PC-9 (cell line): ENCODE measurements at regions of chr6 and their contacts with region 1.

Region 1: DNA sequence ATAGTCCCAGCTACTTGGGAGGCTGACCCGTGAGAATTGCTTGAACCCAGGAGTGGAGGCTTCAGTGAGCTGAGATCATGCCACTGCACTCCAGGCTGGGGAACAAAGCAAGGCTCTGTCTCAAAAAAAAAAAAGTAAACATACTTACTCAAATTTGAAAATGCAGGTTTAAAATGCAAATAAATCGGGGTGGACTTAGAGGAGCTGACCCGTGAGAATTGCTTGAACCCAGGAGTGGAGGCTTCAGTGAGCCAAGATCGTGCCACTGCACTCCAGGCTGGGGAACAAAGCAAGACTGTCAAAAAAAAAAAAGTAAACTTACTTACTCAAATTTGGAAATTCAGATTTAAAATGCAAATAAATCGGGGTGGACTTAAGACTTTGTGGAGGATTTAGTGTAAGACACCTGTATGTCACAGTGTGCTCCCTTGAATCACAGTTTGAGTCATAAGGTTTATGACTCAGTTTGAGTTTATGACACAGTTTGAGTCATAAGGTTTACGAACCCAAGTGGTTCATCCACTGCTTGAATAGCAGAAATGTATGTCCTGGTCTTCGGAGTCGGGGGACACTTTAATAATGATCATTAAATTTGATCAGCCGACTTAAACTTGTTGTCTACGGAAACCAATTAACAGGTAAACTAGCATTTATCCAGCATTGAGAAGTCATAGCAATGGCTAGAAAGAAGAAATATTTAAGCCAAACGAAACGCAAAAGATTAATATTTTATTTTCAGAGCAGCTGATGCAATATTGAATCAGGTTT is 6.7 kb upstream of the MRPS10 start:
- DNase-seq: peak; percentile 20 to 97
- H3K4me3 ChIP-seq: peak overlapping the region; percentile 61
- H3K27ac ChIP-seq: peak overlapping the region; percentile 99
- H3K4me1 ChIP-seq: peaks cover 97% of the 10 kb centered on the region
- H3K27me3 ChIP-seq: no peaks in the 10 kb centered on the region
- CTCF ChIP-seq: no peak

Region 2: GRCh38 chr6:41887331-41887751 is 337.1 kb before region 1 on chr6:
- CTCF ChIA-PET with region 1: no interaction called
- POLR2A ChIA-PET with region 1: no interaction called
- intact Hi-C with region 1: no loop called
- DNase-seq: no peak
- H3K4me3 ChIP-seq: no peak overlapping the region
- H3K27ac ChIP-seq: no peak overlapping the region
- H3K4me1 ChIP-seq: no peaks in the 10 kb centered on the region
- H3K27me3 ChIP-seq: no peaks in the 10 kb centered on the region
- CTCF ChIP-seq: no peak

Region 3: GRCh38 chr6:41920921-41921711 is 303.3 kb before region 1 on chr6 and contains the starts of genes BYSL and MED20:
- CTCF ChIA-PET with region 1: interaction called, 3 read pairs
- POLR2A ChIA-PET with region 1: no interaction called
- intact Hi-C with region 1: loop called (anchors 5 kb)
- DNase-seq: peak; percentile 89 to 92
- H3K4me3 ChIP-seq: peak within 1 kb of the TSS; percentile 63
- H3K27ac ChIP-seq: peak within 1 kb of the TSS; percentile 88
- H3K4me1 ChIP-seq: peaks cover 42% of the 10 kb centered on the region
- H3K27me3 ChIP-seq: no peaks in the 10 kb centered on the region
- CTCF ChIP-seq: peak; percentile 99
- total RNA-seq, gene BYSL: 33.0 and 36.5 TPM in 2 replicates
- total RNA-seq, gene MED20: 45.8 and 61.8 TPM in 2 replicates

Region 4: DNA sequence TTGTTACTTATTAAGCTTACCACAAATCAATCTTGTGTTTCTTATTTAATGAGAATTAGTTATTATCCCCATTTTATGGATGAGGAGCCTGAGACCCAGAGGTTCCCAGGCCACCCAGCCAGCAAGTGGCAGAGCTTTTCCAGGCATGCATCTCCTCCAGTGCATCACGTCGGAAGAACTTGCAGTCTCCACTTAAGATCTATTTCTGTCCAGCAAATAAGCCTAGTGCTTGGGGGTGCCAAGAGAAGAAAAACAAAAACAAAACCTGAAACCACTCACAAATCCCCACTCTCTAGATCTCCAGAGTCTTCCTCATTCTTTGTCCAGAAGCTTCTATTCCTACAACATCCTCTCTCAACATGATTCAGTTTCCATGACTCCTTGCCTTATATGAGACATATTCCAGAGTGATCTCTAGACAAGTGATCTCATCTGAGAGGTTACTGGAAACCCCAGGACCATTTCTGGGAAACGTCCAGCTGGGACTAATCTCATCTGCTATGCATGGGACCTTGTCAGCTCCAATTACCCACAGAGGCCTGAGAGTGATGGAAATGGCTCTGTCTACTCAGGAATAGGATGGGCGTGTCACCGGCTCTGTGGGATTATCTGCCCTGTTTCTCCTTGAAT is 33.7 kb before region 1 on chr6:
- CTCF ChIA-PET with region 1: no interaction called
- POLR2A ChIA-PET with region 1: interaction called, 10 read pairs
- intact Hi-C with region 1: no loop called
- DNase-seq: no peak
- H3K4me3 ChIP-seq: no peak overlapping the region
- H3K27ac ChIP-seq: no peak overlapping the region
- H3K4me1 ChIP-seq: peaks cover 13% of the 10 kb centered on the region; the same call in 1 of the 2 replicates
- H3K27me3 ChIP-seq: no peaks in the 10 kb centered on the region
- CTCF ChIP-seq: no peak

Region 5: GRCh38 chr6:42204768-42205282 is 19.6 kb before region 1 on chr6:
- CTCF ChIA-PET with region 1: no interaction called
- POLR2A ChIA-PET with region 1: no interaction called
- intact Hi-C with region 1: no loop called
- DNase-seq: no peak
- H3K4me3 ChIP-seq: no peak overlapping the region
- H3K27ac ChIP-seq: no peak overlapping the region
- H3K4me1 ChIP-seq: peaks cover 7% of the 10 kb centered on the region
- H3K27me3 ChIP-seq: no peaks in the 10 kb centered on the region
- CTCF ChIP-seq: no peak

Region 6: DNA sequence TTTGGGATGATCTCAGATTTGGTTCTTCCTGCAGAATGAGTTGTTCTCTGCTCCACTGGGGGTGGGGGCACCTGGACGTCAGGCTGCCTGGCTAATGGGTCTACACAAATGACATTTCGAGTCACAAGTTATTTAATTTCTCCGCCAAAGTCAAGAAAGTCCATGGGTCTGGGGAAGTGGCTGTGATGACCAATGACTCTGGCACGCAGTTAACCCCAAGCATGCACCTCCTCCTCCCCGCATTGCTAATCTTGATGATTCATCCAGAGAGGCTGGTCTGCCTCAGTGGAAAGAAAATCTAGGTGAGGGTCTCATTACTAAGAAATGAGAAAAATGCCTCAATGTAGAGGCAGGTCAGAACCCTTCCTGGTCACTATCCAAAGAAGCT is 91.6 kb after region 1 on chr6:
- CTCF ChIA-PET with region 1: no interaction called
- POLR2A ChIA-PET with region 1: no interaction called
- intact Hi-C with region 1: loop called (anchors 1 kb)
- DNase-seq: peak; percentile 79 to 95
- H3K4me3 ChIP-seq: no peak overlapping the region
- H3K27ac ChIP-seq: peak overlapping the region; percentile 93
- H3K4me1 ChIP-seq: peaks cover 58% of the 10 kb centered on the region
- H3K27me3 ChIP-seq: no peaks in the 10 kb centered on the region
- CTCF ChIP-seq: no peak

Region 7: DNA sequence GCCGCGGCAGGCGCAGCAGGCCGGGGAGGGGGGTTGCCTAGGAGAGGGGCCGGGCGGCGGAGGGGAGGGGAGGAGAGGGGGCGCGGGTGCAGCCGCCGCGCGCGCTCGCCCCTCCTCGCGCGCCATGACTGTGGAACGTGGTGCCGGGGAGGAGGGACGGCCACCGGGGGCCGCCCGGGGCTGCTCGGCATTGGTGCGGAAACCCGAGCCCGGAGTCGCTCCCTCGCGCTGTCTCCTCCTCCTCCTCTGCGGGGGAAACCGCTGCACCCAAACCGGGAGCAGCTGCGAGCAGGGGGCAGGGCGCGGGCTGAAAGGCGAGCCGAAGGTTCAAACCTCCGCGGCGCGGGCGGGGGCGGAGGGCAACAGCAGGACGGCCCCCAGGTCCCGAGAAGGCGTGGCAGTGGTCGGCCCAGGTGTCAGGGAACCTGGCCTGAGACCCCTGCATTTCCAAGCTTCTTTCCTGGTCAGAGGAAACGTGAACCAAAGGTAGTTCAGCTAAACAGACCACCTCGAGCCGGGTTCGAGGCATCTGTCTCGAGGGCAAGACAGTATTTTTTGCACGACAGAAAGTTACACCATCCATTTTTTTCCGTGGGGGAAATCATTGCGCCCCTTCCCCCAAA is 228.7 kb after region 1 on chr6:
- CTCF ChIA-PET with region 1: no interaction called
- POLR2A ChIA-PET with region 1: interaction called, 7 read pairs
- intact Hi-C with region 1: loop called (anchors 2 kb)
- DNase-seq: peak; percentile 75 to 88
- H3K4me3 ChIP-seq: peak overlapping the region; percentile 77
- H3K27ac ChIP-seq: peak overlapping the region; percentile 69
- H3K4me1 ChIP-seq: peaks cover 19% of the 10 kb centered on the region
- H3K27me3 ChIP-seq: no peaks in the 10 kb centered on the region
- CTCF ChIP-seq: no peak

Region 8: DNA sequence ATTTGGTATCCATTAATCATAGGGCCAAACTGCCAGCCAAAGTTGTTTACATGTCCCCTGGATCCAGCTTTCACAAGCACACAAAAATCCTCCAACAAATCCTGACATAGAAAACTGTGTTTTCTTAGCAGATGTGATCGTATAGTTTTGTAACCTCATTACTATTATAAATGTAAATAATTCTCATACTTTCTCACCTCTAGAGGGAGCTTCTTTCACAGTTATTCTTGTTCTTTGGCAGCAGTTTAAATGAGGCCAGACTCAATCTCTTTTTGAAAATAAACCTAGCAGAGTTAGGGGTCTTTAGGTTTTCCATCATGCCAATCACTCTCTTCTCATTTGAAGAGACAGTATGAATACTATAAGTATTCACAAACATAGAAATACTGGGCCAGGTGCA is 1162.1 kb after region 1 on chr6:
- CTCF ChIA-PET with region 1: interaction called, 10 read pairs
- POLR2A ChIA-PET with region 1: no interaction called
- intact Hi-C with region 1: no loop called
- DNase-seq: no peak
- H3K4me3 ChIP-seq: no peak overlapping the region
- H3K27ac ChIP-seq: no peak overlapping the region
- H3K4me1 ChIP-seq: no peaks in the 10 kb centered on the region
- H3K27me3 ChIP-seq: no peaks in the 10 kb centered on the region
- CTCF ChIP-seq: peak; percentile 72